ENCODE measurements at regions of chr3 and their contacts with region 1.

Region 1: DNA sequence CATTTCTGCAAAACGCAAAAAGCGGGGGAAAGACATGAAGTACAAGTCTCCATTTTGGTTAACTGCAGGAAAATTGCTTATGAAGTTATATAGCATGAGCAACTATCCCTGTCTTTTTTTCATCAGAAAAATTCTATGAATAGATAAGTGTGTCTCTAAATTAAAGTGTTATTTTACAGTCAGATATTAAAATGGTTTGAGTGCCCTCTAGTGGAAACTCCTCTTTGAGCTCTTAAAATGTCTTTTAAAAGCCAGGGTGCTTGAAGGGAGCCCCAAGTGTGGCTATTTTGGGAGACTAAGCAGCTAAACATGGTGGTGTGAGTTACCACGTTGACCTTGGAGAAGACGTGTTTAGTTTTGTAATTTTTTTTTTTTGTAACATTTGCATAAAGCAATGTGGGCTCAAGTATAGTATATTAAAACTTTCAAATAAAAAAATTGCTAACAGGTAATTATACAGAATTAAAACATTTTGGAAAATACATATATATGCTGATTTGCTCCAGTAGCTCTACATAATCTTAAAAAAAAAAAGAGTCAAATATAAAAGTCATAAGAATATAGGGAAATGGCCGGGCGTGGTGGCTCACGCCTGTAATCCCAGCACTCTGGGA is 77.2 kb downstream of the PPP2R3A start:
- DNase-seq: peak in 1 of 4 donors; percentile 13
- ATAC-seq: no peak
- H3K4me3 ChIP-seq: no peak overlapping the region
- H3K27ac ChIP-seq: no peak overlapping the region
- H3K4me1 ChIP-seq: no peaks in the 10 kb centered on the region
- H3K27me3 ChIP-seq: no peaks in the 10 kb centered on the region
- CTCF ChIP-seq: peak; percentile 44 to 61 (median 52)
- POLR2A ChIP-seq: no peak

Region 2: GRCh38 chr3:135922903-135923250 is 119.8 kb before region 1 on chr3:
- intact Hi-C with region 1: loop called (anchors 5 kb)
- DNase-seq: no peak
- ATAC-seq: peak; percentile 24
- H3K4me3 ChIP-seq: no peak overlapping the region
- H3K27ac ChIP-seq: peak overlapping the region in 3 of 4 donors; percentile 46 to 69 (median 64)
- H3K4me1 ChIP-seq: peaks cover 20% of the 10 kb centered on the region
- H3K27me3 ChIP-seq: no peaks in the 10 kb centered on the region
- CTCF ChIP-seq: no peak
- POLR2A ChIP-seq: no peak

Region 3: GRCh38 chr3:136162322-136162721 is 119.6 kb after region 1 on chr3:
- intact Hi-C with region 1: no loop called
- DNase-seq: no peak
- ATAC-seq: no peak
- H3K4me3 ChIP-seq: no peak overlapping the region
- H3K27ac ChIP-seq: no peak overlapping the region
- H3K4me1 ChIP-seq: peaks cover 39% of the 10 kb centered on the region
- H3K27me3 ChIP-seq: no peaks in the 10 kb centered on the region
- CTCF ChIP-seq: no peak
- POLR2A ChIP-seq: no peak

Region 4: DNA sequence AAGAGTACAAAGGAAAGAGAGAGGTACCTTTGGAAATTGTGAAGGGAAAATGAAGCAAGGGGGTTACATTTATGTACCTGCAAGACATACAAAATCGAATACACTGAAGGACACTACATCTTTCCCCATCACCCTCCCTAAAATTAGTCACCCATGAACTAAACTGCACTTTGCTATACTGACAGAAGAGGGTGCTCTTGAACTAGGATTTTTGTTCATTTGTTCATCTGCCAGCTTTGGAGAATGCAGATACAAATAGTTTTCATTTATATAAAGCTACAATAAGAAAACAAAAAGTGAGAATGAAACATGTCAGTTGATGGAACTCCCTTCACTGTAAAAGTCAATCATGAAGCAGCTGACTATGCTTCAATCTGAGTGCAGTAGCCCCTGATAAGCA is 263.2 kb after region 1 on chr3:
- intact Hi-C with region 1: no loop called
- DNase-seq: no peak
- ATAC-seq: no peak
- H3K4me3 ChIP-seq: no peak overlapping the region
- H3K27ac ChIP-seq: no peak overlapping the region
- H3K4me1 ChIP-seq: no peaks in the 10 kb centered on the region
- H3K27me3 ChIP-seq: no peaks in the 10 kb centered on the region
- CTCF ChIP-seq: peak in 1 of 7 experiments; percentile 34
- POLR2A ChIP-seq: no peak

Region 5: GRCh38 chr3:136495213-136495612 is 452.5 kb after region 1 on chr3:
- intact Hi-C with region 1: no loop called
- DNase-seq: no peak
- ATAC-seq: no peak
- H3K4me3 ChIP-seq: no peak overlapping the region
- H3K27ac ChIP-seq: no peak overlapping the region
- H3K4me1 ChIP-seq: no peaks in the 10 kb centered on the region
- H3K27me3 ChIP-seq: no peaks in the 10 kb centered on the region
- CTCF ChIP-seq: no peak
- POLR2A ChIP-seq: no peak

Measured in body of pancreas (tissue), 4 donors.